Motor neuron (in vitro differentiated cells): ENCODE measurements at regions of chr13 and their contacts with region 1.

Region 1: GRCh38 chr13:24727731-24728601 is 36.0 kb upstream of the RNF17 start:
- ATAC-seq: peak; percentile 43 to 100 (median 78)
- H3K4me3 ChIP-seq: no peak overlapping the region
- H3K27ac ChIP-seq: no peak overlapping the region
- H3K4me1 ChIP-seq: no peaks in the 10 kb centered on the region

Region 2: GRCh38 chr13:24627099-24627714 is 100.8 kb before region 1 on chr13:
- in situ Hi-C with region 1: no loop called
- ATAC-seq: peak; percentile 40 to 87 (median 57)
- H3K4me3 ChIP-seq: no peak overlapping the region
- H3K27ac ChIP-seq: no peak overlapping the region
- H3K4me1 ChIP-seq: peaks cover 0 to 5% of the 10 kb centered on the region in 2 donors

Region 3: DNA sequence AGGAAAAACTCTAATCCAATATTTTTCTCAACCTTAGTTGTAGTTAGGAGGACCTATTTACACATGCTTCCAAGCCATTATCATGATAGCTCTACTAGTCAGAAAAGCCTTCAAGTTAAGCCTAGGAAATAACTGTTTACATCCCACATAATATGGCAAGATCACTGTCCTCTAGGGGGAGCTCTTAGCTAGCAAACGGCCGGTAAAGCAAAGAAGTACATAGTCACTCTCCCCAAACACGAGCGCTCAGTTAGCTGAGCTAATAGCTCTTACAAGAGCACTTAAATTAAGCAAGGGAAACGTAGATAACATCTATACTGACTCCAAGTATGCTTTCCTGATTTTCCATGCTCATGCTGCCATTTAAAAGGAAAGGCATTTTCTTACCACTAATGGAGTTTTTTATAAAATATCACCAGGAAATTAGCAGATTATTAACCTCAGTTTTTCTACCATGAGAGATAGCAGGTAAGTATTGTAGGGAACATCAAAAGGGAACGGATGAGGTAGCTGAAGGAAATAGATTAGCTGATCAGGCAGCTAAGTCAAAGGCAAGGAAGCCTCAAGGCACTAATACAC is 267.3 kb after region 1 on chr13:
- in situ Hi-C with region 1: loop called in 1 of 9 experiments (anchors 25 kb)
- ATAC-seq: peak in 7 of 8 experiments; percentile 54 to 98 (median 81)
- H3K4me3 ChIP-seq: no peak overlapping the region
- H3K27ac ChIP-seq: no peak overlapping the region
- H3K4me1 ChIP-seq: no peaks in the 10 kb centered on the region